G401 (cell line): ENCODE measurements at regions of chr4 and their contacts with region 1.

Region 1: DNA sequence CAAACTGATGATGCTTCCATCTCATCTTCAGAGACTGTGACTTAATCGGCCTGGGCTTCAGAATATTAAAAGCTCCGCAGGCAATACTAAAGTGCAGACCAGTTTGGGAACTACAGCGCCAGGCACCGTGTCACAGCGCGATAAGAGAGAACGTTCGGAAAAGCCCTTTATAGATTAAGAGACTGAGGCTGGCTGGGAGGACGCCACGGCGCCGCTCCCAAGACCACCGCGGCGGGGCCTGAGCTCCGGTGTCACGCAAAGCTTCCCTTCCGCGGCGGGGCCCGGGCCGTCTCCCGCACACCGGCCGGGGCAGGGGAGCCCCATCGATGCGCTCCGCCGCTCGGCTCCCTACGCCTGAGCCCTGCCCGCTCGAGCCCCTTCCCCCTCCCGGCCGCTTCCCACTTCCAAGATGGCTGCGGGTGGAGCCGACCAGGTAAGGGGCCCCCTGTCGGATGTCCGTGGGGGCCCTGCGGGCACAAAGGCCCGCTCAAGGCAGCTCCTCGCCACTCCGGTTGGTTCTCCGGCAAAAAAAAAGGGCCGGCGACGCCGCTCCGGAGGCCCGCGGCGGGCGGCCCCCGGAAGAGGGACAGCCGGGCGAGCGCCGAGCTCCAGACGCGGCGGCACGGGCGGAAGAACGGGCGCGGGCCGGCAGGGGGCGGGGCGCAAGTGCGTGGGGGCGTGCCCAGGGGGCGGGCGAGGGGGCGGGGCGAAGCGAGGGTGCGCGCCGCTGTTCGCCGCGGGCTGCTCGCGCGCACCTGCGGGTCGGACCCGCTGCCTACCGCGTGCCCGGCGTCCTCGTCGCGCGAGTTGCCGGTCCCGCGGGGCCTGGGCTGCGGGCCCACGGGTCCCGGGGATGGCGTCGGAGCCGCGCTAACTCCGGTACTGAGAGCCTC is at the start of gene TBC1D14:
- DNase-seq: peak; percentile 89
- total RNA-seq, gene TBC1D14: 53.5 and 58.4 TPM in 2 replicates

Region 2: GRCh38 chr4:6840062-6840976 is 69.0 kb before region 1 on chr4:
- in situ Hi-C with region 1: no loop called
- DNase-seq: no peak

Region 3: GRCh38 chr4:6969826-6970800 is 60.8 kb after region 1 on chr4:
- in situ Hi-C with region 1: loop called (anchors 10 kb)
- DNase-seq: no peak